ENCODE measurements at regions of chr18 and their contacts with region 1.

Region 1: DNA sequence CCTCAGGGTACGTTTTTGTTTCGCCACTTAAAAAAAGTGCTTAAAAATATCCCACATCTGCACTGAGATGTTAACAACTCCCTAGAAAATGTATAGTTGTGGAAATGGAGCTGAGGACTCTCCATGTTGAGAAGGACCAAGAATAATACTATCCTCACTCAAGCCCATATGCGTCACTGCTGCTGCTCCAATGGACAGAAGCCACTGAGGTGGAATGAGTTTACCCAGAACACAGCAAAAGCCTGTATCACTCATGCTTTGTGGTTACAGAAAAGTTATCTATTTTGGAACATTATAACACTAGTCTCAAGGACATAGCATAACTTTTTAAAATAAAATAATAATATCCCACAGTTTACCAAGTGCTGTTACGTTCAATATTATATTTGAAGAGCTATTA is 31.9 kb downstream of the DSC3 start:
- DNase-seq: no peak
- ATAC-seq: no peak
- H3K4me3 ChIP-seq: no peak overlapping the region
- H3K27ac ChIP-seq: no peak overlapping the region
- H3K4me1 ChIP-seq: no peaks in the 10 kb centered on the region
- H3K27me3 ChIP-seq: no peaks in the 10 kb centered on the region
- CTCF ChIP-seq: no peak

Region 2: DNA sequence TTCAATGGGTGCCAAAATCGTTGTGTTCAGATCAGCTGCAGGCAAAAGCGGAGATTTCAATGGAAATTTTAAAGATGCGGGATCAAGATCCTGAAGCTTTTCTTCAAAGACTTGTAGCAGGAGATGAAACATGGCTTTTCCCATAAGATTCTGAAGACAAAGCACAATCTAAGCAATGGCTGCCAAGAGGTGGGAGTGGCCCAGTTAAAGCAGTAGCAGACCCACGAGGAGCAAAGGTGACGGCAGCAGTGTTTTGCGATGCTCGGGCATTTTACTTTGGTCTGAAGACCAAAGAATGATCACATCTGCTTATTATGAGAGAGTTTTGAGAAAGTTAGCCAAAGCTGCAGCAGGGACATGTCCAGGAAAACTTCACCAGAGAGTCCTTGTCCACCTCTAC is 191.0 kb before region 1 on chr18:
- intact Hi-C with region 1: no loop called
- DNase-seq: no peak
- ATAC-seq: no peak
- H3K4me3 ChIP-seq: no peak overlapping the region
- H3K27ac ChIP-seq: no peak overlapping the region
- H3K4me1 ChIP-seq: no peaks in the 10 kb centered on the region
- H3K27me3 ChIP-seq: no peaks in the 10 kb centered on the region
- CTCF ChIP-seq: no peak

Region 3: GRCh38 chr18:31252522-31252921 is 241.9 kb after region 1 on chr18:
- intact Hi-C with region 1: loop called in 1 of 2 experiments (anchors 5 kb)
- DNase-seq: no peak
- ATAC-seq: no peak
- H3K4me3 ChIP-seq: no peak overlapping the region
- H3K27ac ChIP-seq: no peak overlapping the region
- H3K4me1 ChIP-seq: no peaks in the 10 kb centered on the region
- H3K27me3 ChIP-seq: no peaks in the 10 kb centered on the region
- CTCF ChIP-seq: no peak